ENCODE measurements at regions of chr7 and their contacts with region 1.

Region 1: GRCh38 chr7:66265566-66265965 is 60.4 kb downstream of the TPST1 start:
- DNase-seq: no peak
- H3K4me3 ChIP-seq: no peak overlapping the region
- H3K27ac ChIP-seq: no peak overlapping the region
- H3K4me1 ChIP-seq: no peaks in the 10 kb centered on the region
- H3K27me3 ChIP-seq: no peaks in the 10 kb centered on the region
- CTCF ChIP-seq: no peak
- POLR2A ChIP-seq: no peak

Region 2: GRCh38 chr7:66330961-66331360 is 65.4 kb after region 1 on chr7:
- intact Hi-C with region 1: loop called (anchors 10 kb)
- DNase-seq: no peak
- H3K4me3 ChIP-seq: no peak overlapping the region
- H3K27ac ChIP-seq: no peak overlapping the region
- H3K4me1 ChIP-seq: no peaks in the 10 kb centered on the region
- H3K27me3 ChIP-seq: no peaks in the 10 kb centered on the region
- CTCF ChIP-seq: no peak
- POLR2A ChIP-seq: no peak